ENCODE measurements at regions of chr5 and their contacts with region 1.

Region 1: DNA sequence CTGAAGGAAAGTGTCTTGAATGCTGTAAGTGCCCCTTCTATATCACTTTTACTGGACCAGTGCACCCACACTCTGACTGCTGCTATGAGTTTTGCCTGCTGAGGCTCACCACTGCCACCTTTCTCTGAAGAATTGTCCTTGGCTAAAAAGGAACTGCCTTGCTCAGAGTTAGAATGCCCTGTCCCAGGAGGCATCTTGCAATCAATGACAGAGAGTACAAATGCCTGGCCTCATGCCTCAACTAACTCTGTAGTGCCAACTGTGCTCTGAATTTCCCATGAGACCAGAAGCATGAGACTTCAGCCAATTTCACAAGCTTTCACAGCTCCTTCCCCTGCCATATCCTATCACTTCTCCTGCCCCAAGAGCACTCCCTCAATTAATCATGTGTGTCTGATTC is 569.7 kb downstream of the ZNF608 start:
- DNase-seq: no peak
- H3K4me3 ChIP-seq: no peak overlapping the region
- H3K27ac ChIP-seq: no peak overlapping the region
- H3K4me1 ChIP-seq: no peaks in the 10 kb centered on the region
- H3K27me3 ChIP-seq: no peaks in the 10 kb centered on the region
- CTCF ChIP-seq: peak in 1 of 2 donors; percentile 31

Region 2: GRCh38 chr5:123881759-123882244 is 294.9 kb before region 1 on chr5:
- CTCF ChIA-PET with region 1: no interaction called
- dilution Hi-C with region 1: loop called (anchors 10 kb)
- in situ Hi-C with region 1: no loop called
- intact Hi-C with region 1: no loop called
- DNase-seq: peak; percentile 1
- H3K4me3 ChIP-seq: no peak overlapping the region
- H3K27ac ChIP-seq: no peak overlapping the region
- H3K4me1 ChIP-seq: no peaks in the 10 kb centered on the region
- H3K27me3 ChIP-seq: no peaks in the 10 kb centered on the region
- CTCF ChIP-seq: no peak

Region 3: GRCh38 chr5:124227914-124228313 is 51.2 kb after region 1 on chr5:
- CTCF ChIA-PET with region 1: no interaction called
- dilution Hi-C with region 1: no loop called
- in situ Hi-C with region 1: no loop called
- intact Hi-C with region 1: no loop called
- DNase-seq: no peak
- H3K4me3 ChIP-seq: no peak overlapping the region
- H3K27ac ChIP-seq: no peak overlapping the region
- H3K4me1 ChIP-seq: no peaks in the 10 kb centered on the region
- H3K27me3 ChIP-seq: no peaks in the 10 kb centered on the region
- CTCF ChIP-seq: no peak

Region 4: GRCh38 chr5:124252191-124252638 is 75.5 kb after region 1 on chr5:
- CTCF ChIA-PET with region 1: no interaction called
- dilution Hi-C with region 1: no loop called
- in situ Hi-C with region 1: no loop called
- intact Hi-C with region 1: no loop called
- DNase-seq: no peak
- H3K4me3 ChIP-seq: no peak overlapping the region
- H3K27ac ChIP-seq: no peak overlapping the region
- H3K4me1 ChIP-seq: no peaks in the 10 kb centered on the region
- H3K27me3 ChIP-seq: no peaks in the 10 kb centered on the region
- CTCF ChIP-seq: no peak

Measured in mammary epithelial cell (primary cell).